ENCODE measurements at regions of chr11 and their contacts with region 1.

Region 1: GRCh38 chr11:61891331-61892084 is at the start of gene FADS3:
- DNase-seq: peak; percentile 69
- ATAC-seq: peak; percentile 93
- H3K4me3 ChIP-seq: peak within 1 kb of the TSS; percentile 63
- H3K27ac ChIP-seq: peak within 1 kb of the TSS; percentile 35; the same call in 1 of the 2 replicates
- H3K4me1 ChIP-seq: peaks cover 26% of the 10 kb centered on the region
- H3K27me3 ChIP-seq: no peaks in the 10 kb centered on the region
- CTCF ChIP-seq: no peak
- POLR2A ChIP-seq: peak; percentile 83
- RAD21 ChIP-seq: no peak
- total RNA-seq, gene FADS3: 38.0 and 54.5 TPM in 2 replicates

Region 2: GRCh38 chr11:61281581-61282250 is 609.8 kb before region 1 on chr11:
- CTCF ChIA-PET with region 1: no interaction called
- POLR2A ChIA-PET with region 1: interaction called, 10 read pairs
- dilution Hi-C with region 1: no loop called
- in situ Hi-C with region 1: no loop called
- intact Hi-C with region 1: no loop called
- DNase-seq: no peak
- ATAC-seq: peak; percentile 100
- H3K4me3 ChIP-seq: no peak overlapping the region
- H3K27ac ChIP-seq: no peak overlapping the region
- H3K4me1 ChIP-seq: no peaks in the 10 kb centered on the region
- H3K27me3 ChIP-seq: no peaks in the 10 kb centered on the region
- CTCF ChIP-seq: no peak
- POLR2A ChIP-seq: no peak
- RAD21 ChIP-seq: no peak

Region 3: DNA sequence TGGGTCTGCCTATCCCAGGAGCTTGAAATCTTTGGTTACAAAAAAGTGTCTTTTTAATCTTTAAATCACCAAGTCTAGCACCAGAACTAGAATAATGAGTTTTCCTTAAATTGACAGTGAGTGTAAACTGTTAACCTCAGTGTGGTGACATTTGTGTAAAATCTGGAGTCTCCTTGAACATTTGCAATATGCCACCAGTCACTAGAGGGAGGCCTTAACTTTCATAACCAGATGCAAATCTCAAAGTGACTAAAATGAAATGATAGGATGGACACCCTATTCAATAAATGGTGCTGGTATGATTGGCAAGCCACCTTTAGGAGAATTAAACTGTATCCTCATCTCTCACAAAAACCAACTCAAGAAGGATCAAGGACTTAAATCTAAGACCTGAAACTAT is 342.2 kb after region 1 on chr11:
- CTCF ChIA-PET with region 1: no interaction called
- POLR2A ChIA-PET with region 1: no interaction called
- dilution Hi-C with region 1: no loop called
- in situ Hi-C with region 1: no loop called
- intact Hi-C with region 1: no loop called
- DNase-seq: no peak
- ATAC-seq: no peak
- H3K4me3 ChIP-seq: no peak overlapping the region
- H3K27ac ChIP-seq: no peak overlapping the region
- H3K4me1 ChIP-seq: no peaks in the 10 kb centered on the region
- H3K27me3 ChIP-seq: peaks cover 3% of the 10 kb centered on the region
- CTCF ChIP-seq: no peak
- POLR2A ChIP-seq: no peak
- RAD21 ChIP-seq: no peak